Right cardiac atrium (tissue), 5 donors: ENCODE measurements at regions of chr16 and their contacts with region 1.

Region 1: GRCh38 chr16:13848795-13849194 is 71.2 kb upstream of the ERCC4 start:
- DNase-seq: no peak
- ATAC-seq: no peak
- H3K4me3 ChIP-seq: no peak overlapping the region
- H3K27ac ChIP-seq: no peak overlapping the region
- H3K4me1 ChIP-seq: no peaks in the 10 kb centered on the region
- H3K27me3 ChIP-seq: no peaks in the 10 kb centered on the region

Region 2: DNA sequence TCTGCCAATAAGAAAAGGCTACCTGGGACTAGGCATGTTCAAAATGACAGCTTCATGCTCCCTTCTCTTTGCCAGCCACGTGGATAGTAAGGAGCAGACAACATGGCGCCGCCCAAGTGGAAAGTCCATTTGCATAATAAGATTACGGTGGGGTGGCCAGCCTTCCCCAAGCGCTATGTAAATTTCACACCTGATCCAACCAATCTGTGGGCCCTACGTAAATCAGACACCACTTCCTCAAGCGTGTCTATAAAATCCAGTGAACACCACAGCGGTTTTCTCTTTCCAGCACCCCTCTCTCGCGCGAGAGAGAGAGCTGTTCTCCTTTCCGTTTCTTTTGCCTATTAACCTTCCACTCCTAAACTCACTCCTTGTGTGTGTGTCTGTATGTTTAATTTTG is 69.1 kb before region 1 on chr16:
- intact Hi-C with region 1: loop called in 1 of 4 experiments (anchors 10 kb)
- DNase-seq: no peak
- ATAC-seq: no peak
- H3K4me3 ChIP-seq: no peak overlapping the region
- H3K27ac ChIP-seq: no peak overlapping the region
- H3K4me1 ChIP-seq: no peaks in the 10 kb centered on the region
- H3K27me3 ChIP-seq: no peaks in the 10 kb centered on the region